ENCODE measurements at regions of chrX and their contacts with region 1.

Region 1: GRCh38 chrX:9885150-9885549 is 82.0 kb upstream of the CLDN34 start:
- DNase-seq: peak; percentile 52 to 88 (median 74)

Region 2: GRCh38 chrX:9995855-9996339 is 110.7 kb after region 1 on chrX:
- intact Hi-C with region 1: loop called (anchors 10 kb)
- DNase-seq: peak; percentile 67 to 95 (median 87)